Activated B cell treated with CpG ODN at 0.5 μM for 24 hours (primary cell): ENCODE measurements at regions of chr2 and their contacts with region 1.

Region 1: GRCh38 chr2:171230216-171230615 is 69.5 kb upstream of the TLK1 start:
- DNase-seq: no peak
- ATAC-seq: no peak
- H3K4me3 Mint-ChIP-seq: no peak overlapping the region
- H3K27ac Mint-ChIP-seq: no peak overlapping the region
- H3K4me1 Mint-ChIP-seq: peaks cover 2% of the 10 kb centered on the region
- H3K27me3 Mint-ChIP-seq: no peaks in the 10 kb centered on the region
- CTCF ChIP-seq: no peak

Region 2: GRCh38 chr2:171180229-171180930 is 49.8 kb before region 1 on chr2:
- CTCF ChIA-PET with region 1: no interaction called
- POLR2A ChIA-PET with region 1: no interaction called
- intact Hi-C with region 1: loop called (anchors 5 kb)
- DNase-seq: no peak
- ATAC-seq: no peak
- H3K4me3 Mint-ChIP-seq: no peak overlapping the region
- H3K27ac Mint-ChIP-seq: no peak overlapping the region
- H3K4me1 Mint-ChIP-seq: peaks cover 23% of the 10 kb centered on the region
- H3K27me3 Mint-ChIP-seq: no peaks in the 10 kb centered on the region
- CTCF ChIP-seq: no peak

Region 3: GRCh38 chr2:171244466-171244969 is 14.3 kb after region 1 on chr2:
- CTCF ChIA-PET with region 1: no interaction called
- POLR2A ChIA-PET with region 1: no interaction called
- intact Hi-C with region 1: no loop called
- DNase-seq: no peak
- ATAC-seq: no peak
- H3K4me3 Mint-ChIP-seq: no peak overlapping the region
- H3K27ac Mint-ChIP-seq: no peak overlapping the region
- H3K4me1 Mint-ChIP-seq: peaks cover 14% of the 10 kb centered on the region
- H3K27me3 Mint-ChIP-seq: no peaks in the 10 kb centered on the region
- CTCF ChIP-seq: no peak

Region 4: GRCh38 chr2:172113617-172114016 is 883.4 kb after region 1 on chr2:
- CTCF ChIA-PET with region 1: no interaction called
- POLR2A ChIA-PET with region 1: no interaction called
- intact Hi-C with region 1: no loop called
- DNase-seq: no peak
- ATAC-seq: no peak
- H3K4me3 Mint-ChIP-seq: no peak overlapping the region
- H3K27ac Mint-ChIP-seq: no peak overlapping the region
- H3K4me1 Mint-ChIP-seq: no peaks in the 10 kb centered on the region
- H3K27me3 Mint-ChIP-seq: peaks cover 28% of the 10 kb centered on the region
- CTCF ChIP-seq: no peak